ENCODE measurements at regions of chr2 and their contacts with region 1.

Region 1: DNA sequence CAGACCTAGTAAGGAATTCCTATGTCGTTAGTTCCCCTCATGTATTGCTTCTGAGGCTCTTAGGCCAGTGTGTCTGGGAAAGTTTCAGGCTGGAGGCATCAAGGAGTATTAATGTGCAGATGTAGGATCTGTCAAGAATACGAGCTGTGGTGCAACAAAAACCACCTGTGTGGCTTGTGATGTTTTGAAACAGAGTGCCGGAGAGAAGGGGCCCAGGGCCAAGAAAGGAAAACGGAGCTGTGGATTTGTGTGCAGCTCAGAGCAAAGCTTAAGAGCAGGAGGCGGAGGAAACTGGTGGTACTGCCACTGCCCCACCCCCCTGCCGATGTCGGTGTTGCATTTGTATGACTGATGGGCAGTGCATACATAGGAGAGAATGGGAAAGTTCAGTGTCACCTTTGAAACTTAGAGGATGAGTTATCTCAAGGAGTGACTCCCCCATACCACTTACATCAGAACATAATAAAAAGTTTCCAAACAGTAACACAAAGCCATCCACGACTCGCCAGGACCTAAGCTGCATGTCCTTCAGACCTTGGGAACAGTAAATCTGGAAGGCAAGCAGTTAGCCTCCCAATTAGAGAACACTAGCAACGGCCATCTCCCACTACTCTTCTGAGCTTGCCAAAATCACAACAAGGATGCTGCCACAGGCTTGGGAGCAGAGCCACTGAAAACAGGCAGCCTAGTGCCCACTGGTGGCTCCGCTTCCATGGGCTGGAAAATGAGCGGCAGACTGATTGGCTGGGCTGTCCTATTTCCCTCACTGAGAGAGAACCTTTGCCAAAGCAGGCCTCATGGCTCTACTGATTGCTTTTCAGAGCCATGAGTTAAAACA is 152.7 kb upstream of the NT5C1B start:
- DNase-seq: peak; percentile 94
- H3K4me3 ChIP-seq: peak overlapping the region in 2 of 4 donors; percentile 13 to 16
- H3K27ac ChIP-seq: peak overlapping the region; percentile 64 to 81 (median 66)
- H3K4me1 ChIP-seq: peaks cover 8 to 61% (median 40%) of the 10 kb centered on the region in 4 donors
- H3K27me3 ChIP-seq: no peaks in the 10 kb centered on the region
- CTCF ChIP-seq: peak; percentile 22 to 42 (median 23)
- EP300 ChIP-seq: no peak
- POLR2A ChIP-seq: no peak

Region 2: GRCh38 chr2:18387441-18388206 is 354.5 kb before region 1 on chr2:
- intact Hi-C with region 1: loop called (anchors 5 kb)
- DNase-seq: peak; percentile 97
- H3K4me3 ChIP-seq: no peak overlapping the region
- H3K27ac ChIP-seq: peak overlapping the region; percentile 63 to 79 (median 70)
- H3K4me1 ChIP-seq: peaks cover 0 to 26% (median 20%) of the 10 kb centered on the region in 4 donors
- H3K27me3 ChIP-seq: no peaks in the 10 kb centered on the region
- CTCF ChIP-seq: peak; percentile 92 to 98 (median 94)
- EP300 ChIP-seq: no peak
- POLR2A ChIP-seq: no peak

Region 3: GRCh38 chr2:18422432-18423165 is 319.5 kb before region 1 on chr2:
- intact Hi-C with region 1: no loop called
- DNase-seq: no peak
- H3K4me3 ChIP-seq: no peak overlapping the region
- H3K27ac ChIP-seq: no peak overlapping the region
- H3K4me1 ChIP-seq: peaks cover 0 to 9% (median 7%) of the 10 kb centered on the region in 4 donors
- H3K27me3 ChIP-seq: no peaks in the 10 kb centered on the region
- CTCF ChIP-seq: no peak
- EP300 ChIP-seq: no peak
- POLR2A ChIP-seq: no peak

Region 4: GRCh38 chr2:18560031-18560796 is 181.9 kb before region 1 on chr2 and contains the start of gene RDH14:
- intact Hi-C with region 1: loop called (anchors 5 kb)
- DNase-seq: peak; percentile 99
- H3K4me3 ChIP-seq: peak within 1 kb of the TSS; percentile 75 to 95 (median 89)
- H3K27ac ChIP-seq: peak within 1 kb of the TSS; percentile 97 to 100 (median 99)
- H3K4me1 ChIP-seq: peaks cover 35 to 54% (median 44%) of the 10 kb centered on the region in 4 donors
- H3K27me3 ChIP-seq: no peaks in the 10 kb centered on the region
- CTCF ChIP-seq: peak in 2 of 3 experiments; percentile 8
- EP300 ChIP-seq: no peak
- POLR2A ChIP-seq: peak; percentile 59
- total RNA-seq, gene RDH14: 56.9 to 72.2 (median 65.1) TPM

Measured in esophagus muscularis mucosa (tissue), 4 donors.